ENCODE measurements at regions of chr18 and their contacts with region 1.

Region 1: DNA sequence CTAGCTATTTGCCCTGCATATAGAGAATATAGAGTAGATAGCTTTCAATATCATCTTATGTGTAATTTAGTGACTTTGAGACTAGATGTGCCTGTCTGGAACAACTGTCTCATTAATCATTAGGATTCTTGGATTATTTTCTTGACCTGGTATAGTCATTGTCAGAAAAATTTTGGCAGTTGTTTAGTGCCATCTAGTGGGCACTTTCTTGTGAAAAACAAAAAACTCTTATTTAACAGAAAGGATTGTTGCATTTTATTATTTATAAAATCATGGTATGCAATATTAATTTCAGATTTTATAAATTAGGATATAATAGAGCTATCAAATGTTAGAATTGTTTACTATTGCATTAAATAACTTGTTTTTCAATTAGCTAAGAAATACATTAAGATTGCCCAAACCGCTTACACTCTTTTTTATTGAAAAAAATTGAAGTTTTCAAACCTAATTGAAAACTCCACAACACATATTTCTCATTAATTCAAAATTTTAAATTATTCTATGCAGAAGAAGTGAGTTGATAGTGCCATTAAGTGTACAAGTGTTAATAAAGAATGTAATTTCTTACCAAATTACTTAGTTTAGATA is 80.3 kb downstream of the DYNAP start:
- DNase-seq: no peak
- H3K4me3 ChIP-seq: no peak overlapping the region
- H3K27ac ChIP-seq: no peak overlapping the region
- H3K27me3 ChIP-seq: no peaks in the 10 kb centered on the region
- CTCF ChIP-seq: peak; percentile 62

Region 2: DNA sequence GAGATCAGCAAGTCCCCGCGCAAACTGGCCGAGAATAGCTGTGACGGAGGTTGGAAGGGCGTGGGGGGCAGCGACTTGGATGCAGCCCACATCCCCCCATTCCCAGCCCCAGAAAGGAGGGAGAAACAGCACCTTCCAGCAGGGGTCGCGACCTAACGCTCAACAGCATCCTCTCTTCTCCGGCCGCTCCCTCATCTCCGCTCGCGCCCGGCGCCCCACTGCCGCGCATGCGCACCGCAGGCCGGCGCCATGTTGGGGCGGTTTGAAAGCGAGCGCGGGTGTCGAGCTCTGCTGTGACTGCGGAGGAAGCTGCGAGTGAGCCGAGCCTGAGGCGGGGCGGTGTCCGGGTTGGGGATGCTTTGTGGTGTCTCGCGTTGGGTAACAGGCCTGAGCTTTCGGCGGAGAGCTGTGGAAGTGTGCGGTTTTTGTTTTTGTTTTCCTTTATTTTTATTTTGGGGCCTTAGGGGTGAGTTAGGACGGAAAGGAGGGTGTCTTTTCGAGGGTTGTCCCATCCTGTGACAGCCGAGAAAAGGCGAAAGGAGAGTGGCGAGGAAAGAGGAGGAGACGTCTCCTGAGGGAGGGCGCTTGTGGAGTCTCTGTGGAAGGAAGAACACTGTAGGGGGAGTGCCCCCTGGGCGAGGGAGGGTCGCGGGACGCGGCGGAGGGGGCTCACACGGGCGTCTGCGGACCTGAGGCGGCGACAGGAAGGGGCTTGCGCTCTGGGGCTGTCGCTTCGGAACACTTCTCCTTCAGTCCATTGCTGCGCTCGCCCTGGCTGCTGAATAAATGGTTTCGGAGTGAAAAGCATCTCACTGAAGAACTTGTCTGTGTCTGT is 313.5 kb before region 1 on chr18 and contains the starts of genes C18orf54 and STARD6:
- CTCF ChIA-PET with region 1: interaction called, 13 read pairs
- POLR2A ChIA-PET with region 1: no interaction called
- DNase-seq: peak; percentile 67
- H3K4me3 ChIP-seq: peak within 1 kb of the TSS; percentile 89
- H3K27ac ChIP-seq: peak within 1 kb of the TSS; percentile 43
- H3K27me3 ChIP-seq: no peaks in the 10 kb centered on the region
- CTCF ChIP-seq: peak; percentile 33
- polyA plus RNA-seq, gene C18orf54: 2.7 and 3.8 TPM in 2 replicates
- polyA plus RNA-seq, gene STARD6: 0.14 TPM in 1 of 2 replicates, not detected in the other

Region 3: DNA sequence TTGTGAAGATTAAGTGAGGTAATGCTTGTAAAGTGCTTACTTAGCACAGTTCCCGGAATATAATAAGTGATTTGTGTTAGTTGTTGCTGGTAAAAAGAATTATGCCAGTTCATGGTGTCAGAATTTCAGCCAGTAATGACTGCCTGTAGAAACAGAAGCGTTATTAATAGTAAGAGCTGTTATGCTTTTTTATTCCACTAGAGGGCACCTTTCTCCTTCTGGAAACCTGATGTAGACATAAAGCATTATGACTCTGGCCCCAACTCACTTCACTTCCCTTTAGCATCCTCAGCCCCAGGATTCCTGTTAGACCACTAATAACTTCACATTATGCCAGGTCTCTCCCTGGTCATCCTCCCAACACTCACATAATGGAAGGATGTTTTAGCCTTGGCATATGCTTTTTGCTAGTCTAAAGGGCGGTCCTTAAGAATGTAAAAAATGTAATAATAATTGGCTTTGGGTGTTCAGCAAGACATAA is 278.8 kb before region 1 on chr18:
- CTCF ChIA-PET with region 1: interaction called, 39 read pairs
- POLR2A ChIA-PET with region 1: no interaction called
- DNase-seq: peak; percentile 34
- H3K4me3 ChIP-seq: no peak overlapping the region
- H3K27ac ChIP-seq: no peak overlapping the region
- H3K27me3 ChIP-seq: no peaks in the 10 kb centered on the region
- CTCF ChIP-seq: peak; percentile 76

Region 4: GRCh38 chr18:54444319-54444914 is 227.0 kb before region 1 on chr18:
- CTCF ChIA-PET with region 1: interaction called, 96 read pairs
- POLR2A ChIA-PET with region 1: no interaction called
- DNase-seq: peak; percentile 27
- H3K4me3 ChIP-seq: no peak overlapping the region
- H3K27ac ChIP-seq: no peak overlapping the region
- H3K27me3 ChIP-seq: no peaks in the 10 kb centered on the region
- CTCF ChIP-seq: peak; percentile 80

Region 5: GRCh38 chr18:54558609-54559585 is 112.5 kb before region 1 on chr18:
- CTCF ChIA-PET with region 1: interaction called, 42 read pairs
- POLR2A ChIA-PET with region 1: no interaction called
- DNase-seq: no peak
- H3K4me3 ChIP-seq: no peak overlapping the region
- H3K27ac ChIP-seq: no peak overlapping the region
- H3K27me3 ChIP-seq: no peaks in the 10 kb centered on the region
- CTCF ChIP-seq: peak; percentile 71

Region 6: DNA sequence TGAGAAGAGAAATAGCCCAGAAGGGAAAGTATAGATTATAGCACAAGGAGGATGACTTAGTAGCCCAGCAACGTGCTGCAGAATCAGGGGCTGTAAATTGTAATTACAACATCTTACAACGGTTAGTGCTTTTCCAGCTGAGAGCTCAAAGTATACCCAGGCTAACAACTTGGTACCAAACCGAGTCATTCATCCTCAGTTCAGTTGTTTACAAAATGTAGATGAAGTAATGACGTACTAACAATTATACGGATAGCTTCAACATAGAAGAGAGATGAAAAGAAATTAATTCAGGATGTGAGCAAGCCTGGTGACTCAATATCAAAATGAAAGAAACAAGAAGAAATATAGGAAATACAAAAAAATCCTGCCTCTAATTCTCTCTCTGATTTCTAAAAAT is 18.8 kb after region 1 on chr18:
- CTCF ChIA-PET with region 1: interaction called, 10 read pairs
- POLR2A ChIA-PET with region 1: no interaction called
- DNase-seq: no peak
- H3K4me3 ChIP-seq: no peak overlapping the region; the same call in 1 of the 2 replicates
- H3K27ac ChIP-seq: no peak overlapping the region
- H3K27me3 ChIP-seq: no peaks in the 10 kb centered on the region
- CTCF ChIP-seq: no peak

Region 7: DNA sequence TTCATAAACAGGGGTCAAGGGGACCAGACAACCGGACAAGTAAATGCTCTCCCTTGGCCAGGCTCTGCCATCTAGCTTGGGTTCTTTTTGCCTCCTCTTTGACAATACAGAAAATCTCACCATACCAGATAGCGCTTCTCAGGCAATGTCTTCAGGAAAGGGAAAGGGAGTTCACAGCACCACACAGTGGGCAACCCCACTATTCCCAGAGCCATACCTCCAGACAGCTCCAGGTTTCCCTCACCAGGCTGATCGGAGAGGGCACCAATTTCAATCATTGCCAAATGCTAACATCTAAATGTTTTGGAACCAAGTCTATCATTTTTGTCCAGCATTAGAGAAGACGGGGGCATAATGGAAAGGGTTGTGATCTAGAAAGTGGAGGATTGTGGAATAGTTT is 259.8 kb after region 1 on chr18:
- CTCF ChIA-PET with region 1: no interaction called
- POLR2A ChIA-PET with region 1: no interaction called
- DNase-seq: no peak
- H3K4me3 ChIP-seq: no peak overlapping the region
- H3K27ac ChIP-seq: no peak overlapping the region
- H3K27me3 ChIP-seq: no peaks in the 10 kb centered on the region
- CTCF ChIP-seq: no peak

Region 8: DNA sequence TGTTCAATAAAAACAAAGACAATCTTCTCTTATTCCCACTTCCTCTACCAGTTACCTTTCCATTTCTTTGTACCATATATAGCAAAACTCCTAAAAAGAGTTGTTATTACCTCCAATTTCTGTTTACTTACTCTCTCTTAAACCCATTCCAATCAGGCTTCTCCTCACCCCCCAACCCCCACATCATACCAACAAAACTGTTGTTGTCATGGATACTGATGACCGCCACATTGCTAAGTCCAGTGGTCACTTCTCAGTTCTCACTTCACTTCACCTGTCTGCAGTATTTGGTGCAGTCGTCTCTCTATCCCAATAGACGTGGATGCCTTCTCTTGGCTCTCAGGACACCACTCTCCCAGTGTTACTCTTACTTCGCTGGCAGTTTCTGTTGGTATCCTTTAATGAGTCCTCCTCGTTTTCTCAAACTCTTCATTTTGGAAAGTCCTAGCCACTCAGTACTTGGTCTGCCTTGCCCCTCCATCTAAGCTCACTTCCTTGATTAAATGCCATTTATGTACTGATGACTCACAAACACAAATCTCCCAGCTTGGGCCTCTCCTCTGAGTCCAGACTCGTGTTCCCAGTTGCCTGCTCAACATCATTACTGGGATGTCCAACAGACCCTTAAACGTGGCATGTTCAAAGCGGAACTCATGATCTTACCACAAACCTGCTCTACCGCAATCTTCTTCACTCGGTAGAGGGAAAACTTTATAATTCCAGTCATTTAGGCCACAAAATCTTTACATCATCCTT is 301.5 kb after region 1 on chr18:
- CTCF ChIA-PET with region 1: interaction called, 12 read pairs
- POLR2A ChIA-PET with region 1: no interaction called
- DNase-seq: no peak
- H3K4me3 ChIP-seq: no peak overlapping the region
- H3K27ac ChIP-seq: no peak overlapping the region
- H3K27me3 ChIP-seq: no peaks in the 10 kb centered on the region
- CTCF ChIP-seq: no peak

Region 9: DNA sequence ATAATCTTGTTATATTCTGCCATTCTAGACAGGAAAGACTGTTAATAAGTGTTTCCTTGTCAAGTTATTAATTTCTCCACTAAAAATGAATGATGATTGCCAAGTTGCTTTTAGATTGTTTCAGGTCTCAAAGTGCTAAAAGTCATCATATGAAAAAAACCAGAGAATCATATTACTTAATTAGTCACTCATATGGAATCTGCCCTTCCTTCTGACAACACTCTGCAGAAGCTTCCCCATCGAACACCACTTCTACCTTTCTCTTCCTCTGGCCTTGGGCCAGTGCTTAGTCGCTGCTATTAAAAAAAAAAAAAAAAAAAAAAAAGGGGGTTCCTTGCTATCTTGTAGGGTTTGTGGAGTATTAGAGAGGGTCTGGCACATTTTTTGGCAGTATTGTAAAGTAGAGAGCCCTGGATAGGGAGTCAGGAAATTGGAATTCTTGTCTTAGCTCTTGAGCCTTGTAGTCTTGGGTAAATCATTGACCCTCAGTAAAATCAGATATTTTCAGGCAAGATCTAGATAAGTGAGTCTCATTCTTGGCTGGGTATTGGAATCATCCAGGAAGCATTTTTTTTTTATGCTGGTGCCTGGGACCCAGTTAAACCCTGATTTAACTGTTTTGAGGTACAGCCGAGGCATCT is 429.6 kb after region 1 on chr18:
- CTCF ChIA-PET with region 1: no interaction called
- POLR2A ChIA-PET with region 1: no interaction called
- DNase-seq: no peak
- H3K4me3 ChIP-seq: no peak overlapping the region
- H3K27ac ChIP-seq: no peak overlapping the region
- H3K27me3 ChIP-seq: no peaks in the 10 kb centered on the region
- CTCF ChIP-seq: no peak

Measured in AG04450 (cell line).